HCT116 (cell line): ENCODE measurements at regions of chr6 and their contacts with region 1.

Region 1: GRCh38 chr6:31114970-31115849 is 610 bp downstream of the PSORS1C1 start:
- DNase-seq: peak; percentile 58
- ATAC-seq: peak; percentile 74
- H3K4me3 ChIP-seq: peak overlapping the region; percentile 51 to 64
- H3K27ac ChIP-seq: peak overlapping the region; percentile 83
- H3K4me1 ChIP-seq: peaks cover 29 to 49% of the 10 kb centered on the region in 2 experiments
- H3K27me3 ChIP-seq: no peaks in the 10 kb centered on the region
- CTCF ChIP-seq: peak; percentile 52 to 55 (median 53); a peak in 5 of 6 replicates
- POLR2A ChIP-seq: no peak
- RAD21 ChIP-seq: peak; percentile 60

Region 2: GRCh38 chr6:31097568-31098053 is 17.6 kb before region 1 on chr6:
- CTCF ChIA-PET with region 1: interaction called, 8 read pairs
- POLR2A ChIA-PET with region 1: interaction called, 11 read pairs
- RAD21 ChIA-PET with region 1: no interaction called
- intact Hi-C with region 1: loop called (anchors 1 kb)
- DNase-seq: no peak
- ATAC-seq: no peak
- H3K4me3 ChIP-seq: no peak overlapping the region
- H3K27ac ChIP-seq: no peak overlapping the region
- H3K4me1 ChIP-seq: peaks cover 3 to 12% of the 10 kb centered on the region in 2 experiments; a peak in 3 of 4 replicates
- H3K27me3 ChIP-seq: no peaks in the 10 kb centered on the region
- CTCF ChIP-seq: no peak
- POLR2A ChIP-seq: no peak
- RAD21 ChIP-seq: no peak

Region 3: DNA sequence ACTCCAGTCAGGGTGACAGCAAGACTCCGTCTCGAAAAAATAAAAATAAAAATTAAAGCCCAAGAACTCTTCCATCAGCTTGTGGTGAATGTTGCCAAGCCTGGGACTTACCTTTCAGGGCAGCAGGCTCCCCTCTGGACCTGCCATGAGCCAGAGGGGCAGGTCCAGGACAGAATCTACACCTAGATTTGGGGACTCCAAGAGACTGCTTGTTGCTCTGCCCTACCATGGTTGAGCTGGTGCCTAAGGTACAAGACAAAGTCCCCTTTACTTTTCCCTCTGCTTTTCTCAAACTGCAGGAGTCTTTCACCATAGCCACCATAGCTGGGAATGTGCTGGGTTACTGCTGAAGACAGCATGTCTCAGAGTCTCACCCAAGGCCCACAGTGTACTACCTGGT is 12.1 kb before region 1 on chr6:
- CTCF ChIA-PET with region 1: interaction called, 8 read pairs
- POLR2A ChIA-PET with region 1: interaction called, 11 read pairs
- RAD21 ChIA-PET with region 1: no interaction called
- intact Hi-C with region 1: loop called (anchors 1 kb)
- DNase-seq: no peak
- ATAC-seq: no peak
- H3K4me3 ChIP-seq: no peak overlapping the region
- H3K27ac ChIP-seq: no peak overlapping the region
- H3K4me1 ChIP-seq: peaks cover 3 to 12% of the 10 kb centered on the region in 2 experiments; a peak in 3 of 4 replicates
- H3K27me3 ChIP-seq: no peaks in the 10 kb centered on the region
- CTCF ChIP-seq: no peak
- POLR2A ChIP-seq: no peak
- RAD21 ChIP-seq: no peak

Region 4: DNA sequence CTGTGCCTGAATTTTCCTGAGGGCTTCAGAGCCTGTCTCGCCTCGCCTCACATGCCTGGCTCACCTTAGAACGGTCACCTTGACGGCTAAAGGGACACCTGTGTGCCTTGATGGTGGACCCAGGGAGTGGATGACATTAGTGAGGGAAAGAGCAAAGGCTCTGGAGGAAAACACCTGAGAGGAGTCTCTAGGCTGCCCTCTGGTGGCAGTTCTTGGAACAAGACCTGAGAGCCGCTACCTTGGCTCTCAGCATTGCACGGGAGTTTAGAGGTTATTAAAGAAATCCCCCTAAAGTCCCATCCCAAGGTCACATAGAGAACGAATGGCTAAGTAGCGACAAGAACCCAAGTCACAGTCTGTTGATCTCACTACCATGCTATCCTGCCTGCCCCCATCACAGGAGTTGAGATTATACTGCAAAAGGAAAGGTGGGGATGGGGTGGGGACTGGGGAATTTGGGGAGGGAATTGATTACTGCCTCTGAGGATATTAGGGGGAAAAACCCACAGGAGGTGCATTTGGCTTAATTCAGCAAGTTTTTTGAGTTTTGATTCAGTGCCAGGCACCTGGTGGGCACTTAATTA is 13.0 kb after region 1 on chr6:
- CTCF ChIA-PET with region 1: interaction called, 12 read pairs
- POLR2A ChIA-PET with region 1: interaction called, 7 read pairs
- RAD21 ChIA-PET with region 1: interaction called in 1 of 2 experiments, 5 read pairs
- intact Hi-C with region 1: no loop called
- DNase-seq: no peak
- ATAC-seq: peak; percentile 75
- H3K4me3 ChIP-seq: no peak overlapping the region
- H3K27ac ChIP-seq: no peak overlapping the region
- H3K4me1 ChIP-seq: peaks cover 26 to 39% of the 10 kb centered on the region in 2 experiments
- H3K27me3 ChIP-seq: no peaks in the 10 kb centered on the region
- CTCF ChIP-seq: peak; percentile 62 to 89 (median 76); a peak in 5 of 6 replicates
- POLR2A ChIP-seq: no peak
- RAD21 ChIP-seq: peak; percentile 67